CD8-positive, alpha-beta memory T cell (primary cell): ENCODE measurements at regions of chr13 and their contacts with region 1.

Region 1: DNA sequence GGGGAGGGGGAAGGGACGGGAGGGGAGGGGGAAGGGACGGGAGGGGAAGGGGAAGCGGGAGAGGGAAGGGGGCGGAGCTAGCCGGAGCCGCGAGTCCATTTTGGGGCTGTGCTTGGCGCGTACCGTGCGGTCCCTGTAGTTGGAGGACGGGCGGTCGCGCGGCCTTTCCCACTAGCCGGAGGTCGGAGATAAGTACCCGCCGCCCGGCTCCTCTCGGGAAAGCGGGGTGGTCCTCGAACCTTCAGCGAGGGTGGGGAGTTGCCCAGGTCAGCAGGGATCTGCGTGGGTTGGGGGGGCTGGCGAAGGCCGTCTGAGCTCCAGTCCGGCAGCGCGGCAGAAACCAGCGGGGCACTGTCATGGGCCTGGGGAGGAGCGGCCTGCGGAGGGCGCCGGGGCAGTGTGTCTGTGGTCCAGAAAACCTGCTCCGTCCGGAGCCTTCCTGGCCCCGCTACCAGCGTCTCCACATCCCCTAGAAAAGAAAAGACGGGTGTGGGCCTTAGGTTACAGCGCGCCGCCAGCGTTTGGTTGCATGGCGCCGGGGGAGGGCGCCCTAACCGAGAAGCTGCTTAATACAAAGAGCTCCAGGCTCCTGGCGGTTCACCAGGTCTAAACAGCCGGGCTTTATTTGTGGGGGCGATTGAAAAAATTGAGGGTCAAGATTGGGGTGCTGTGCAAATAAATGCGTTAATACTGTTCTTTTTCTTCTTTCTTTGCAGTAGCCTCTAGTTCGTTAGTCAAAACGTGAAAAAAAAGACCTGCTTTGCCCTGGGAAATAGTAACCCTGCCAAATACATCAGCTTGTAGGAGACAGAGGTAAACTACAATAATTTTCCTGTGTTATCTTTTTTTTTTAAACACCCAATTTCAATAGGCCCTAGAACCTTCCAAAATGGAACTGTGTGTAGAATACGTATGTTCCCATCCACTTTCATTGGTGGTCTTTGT is at the start of gene TRIM13:
- DNase-seq: peak; percentile 62 to 86 (median 78)
- H3K4me3 ChIP-seq: peak within 1 kb of the TSS; percentile 92
- H3K4me3 Mint-ChIP-seq: peak within 1 kb of the TSS; percentile 84 to 96 (median 89)
- H3K27ac ChIP-seq: peak within 1 kb of the TSS; percentile 88
- H3K27ac Mint-ChIP-seq: peak within 1 kb of the TSS; percentile 84 to 96 (median 91)
- H3K4me1 ChIP-seq: peaks cover 36% of the 10 kb centered on the region
- H3K4me1 Mint-ChIP-seq: peaks cover 39 to 58% (median 56%) of the 10 kb centered on the region in 3 donors
- H3K27me3 ChIP-seq: no peaks in the 10 kb centered on the region
- H3K27me3 Mint-ChIP-seq: peaks cover 0 to 2% of the 10 kb centered on the region in 2 donors
- total RNA-seq, gene TRIM13: 16.5 to 17.1 TPM

Region 2: DNA sequence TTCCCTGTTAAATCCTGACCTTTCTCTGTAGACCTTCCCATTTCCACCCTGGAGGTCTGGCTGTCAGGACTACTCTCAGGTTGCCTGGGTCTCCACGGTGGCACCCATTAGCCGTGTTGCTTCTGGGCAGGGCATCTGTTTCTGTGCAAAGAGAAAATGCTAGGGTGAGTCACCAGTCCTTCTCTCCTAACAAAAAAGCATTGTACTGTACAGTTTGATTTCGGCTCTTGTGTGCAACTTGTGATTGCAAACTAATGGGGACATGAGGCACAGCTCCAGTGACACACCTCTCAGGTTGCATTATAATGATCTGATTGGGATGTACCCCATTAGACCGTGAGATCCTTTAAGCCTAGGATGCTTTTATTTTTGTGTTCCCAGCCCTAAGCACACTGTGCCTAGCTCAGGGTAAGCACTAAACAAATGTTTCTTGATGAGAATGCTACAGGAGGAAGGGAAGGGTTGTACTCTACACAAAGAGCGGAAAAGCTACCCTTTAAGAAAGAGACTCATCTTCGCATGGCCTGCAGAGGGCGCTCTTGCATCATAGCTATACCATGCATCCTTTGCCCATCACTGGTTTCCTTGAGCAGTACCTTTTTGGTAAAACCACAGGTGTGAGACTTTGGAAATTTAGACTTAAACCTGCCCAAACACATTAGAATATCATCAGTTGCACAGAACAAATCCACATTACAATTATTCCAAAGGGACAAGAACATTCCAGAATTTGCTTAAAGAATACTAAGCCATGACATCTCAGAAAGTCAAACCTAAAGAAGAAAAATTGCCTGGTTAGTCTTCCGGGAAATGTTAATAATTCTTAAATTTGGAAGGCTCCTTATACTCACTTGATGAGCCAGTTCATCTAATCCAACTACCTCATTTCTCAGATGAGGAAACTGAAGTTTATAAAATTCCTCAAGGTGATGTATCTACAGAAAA is 20.6 kb before region 1 on chr13:
- CTCF ChIA-PET with region 1: interaction called, 10 read pairs
- POLR2A ChIA-PET with region 1: interaction called, 4 read pairs
- DNase-seq: peak; percentile 61 to 81 (median 69)
- H3K4me3 ChIP-seq: no peak overlapping the region
- H3K4me3 Mint-ChIP-seq: no peak overlapping the region
- H3K27ac ChIP-seq: no peak overlapping the region
- H3K27ac Mint-ChIP-seq: peak overlapping the region in 2 of 8 donors; percentile 18 to 21
- H3K4me1 ChIP-seq: no peaks in the 10 kb centered on the region
- H3K4me1 Mint-ChIP-seq: peaks cover 2 to 5% (median 5%) of the 10 kb centered on the region in 3 donors
- H3K27me3 ChIP-seq: no peaks in the 10 kb centered on the region
- H3K27me3 Mint-ChIP-seq: no peaks in the 10 kb centered on the region

Region 3: DNA sequence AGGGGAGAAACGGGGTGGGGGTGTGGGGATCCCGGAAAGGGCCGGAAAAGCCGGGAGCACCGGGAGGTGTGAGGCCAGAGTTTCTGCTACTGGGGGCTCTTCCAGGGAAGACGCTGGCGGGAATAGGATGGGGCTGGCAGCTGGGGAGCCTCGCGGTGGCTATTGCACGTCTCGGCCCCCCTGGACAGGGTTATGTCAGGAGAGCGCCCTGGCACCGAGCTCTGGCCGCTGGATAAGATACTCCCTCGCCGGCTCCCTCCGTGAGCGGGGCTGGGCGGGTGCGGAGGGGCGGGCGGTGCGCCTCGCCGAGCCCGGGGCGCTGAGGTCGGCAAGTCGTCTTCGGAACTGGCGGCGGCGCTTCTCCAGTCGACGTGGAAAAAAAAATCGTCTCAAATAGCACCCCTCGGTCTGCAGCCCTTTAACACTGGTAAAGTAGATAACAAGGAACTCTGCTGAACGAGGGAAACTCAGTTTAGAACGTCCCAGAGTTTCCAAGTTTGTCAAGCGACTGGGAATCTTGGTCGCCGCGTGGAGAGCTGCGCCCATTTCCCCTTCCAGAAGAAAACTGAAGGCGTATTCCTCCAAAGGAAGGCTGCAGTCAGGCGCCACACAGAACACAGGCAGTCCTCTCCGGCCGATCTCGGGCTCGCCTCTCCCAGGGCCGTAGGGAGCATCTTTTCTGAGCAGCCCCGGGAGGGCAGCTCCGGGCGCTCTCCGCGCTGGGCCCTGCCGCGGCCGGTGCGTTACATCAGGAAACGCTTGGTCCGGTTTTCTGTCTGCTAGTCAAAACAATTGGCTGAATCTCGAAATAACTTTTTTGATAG is 133.1 kb after region 1 on chr13:
- CTCF ChIA-PET with region 1: interaction called, 47 read pairs
- POLR2A ChIA-PET with region 1: interaction called, 62 read pairs
- DNase-seq: peak in 3 of 5 donors; percentile 27 to 51 (median 41)
- H3K4me3 ChIP-seq: peak overlapping the region; percentile 23
- H3K4me3 Mint-ChIP-seq: peak overlapping the region; percentile 76 to 91 (median 84)
- H3K27ac ChIP-seq: no peak overlapping the region
- H3K27ac Mint-ChIP-seq: peak overlapping the region in 7 of 8 donors; percentile 50 to 97 (median 80)
- H3K4me1 ChIP-seq: peaks cover 65% of the 10 kb centered on the region
- H3K4me1 Mint-ChIP-seq: peaks cover 52 to 63% (median 60%) of the 10 kb centered on the region in 3 donors
- H3K27me3 ChIP-seq: peaks cover 62% of the 10 kb centered on the region
- H3K27me3 Mint-ChIP-seq: peaks cover 61 to 72% of the 10 kb centered on the region in 2 donors

Region 4: GRCh38 chr13:50244713-50245574 is 247.7 kb after region 1 on chr13:
- CTCF ChIA-PET with region 1: no interaction called
- POLR2A ChIA-PET with region 1: no interaction called
- DNase-seq: peak in 1 of 5 donors; percentile 48
- H3K4me3 ChIP-seq: no peak overlapping the region
- H3K4me3 Mint-ChIP-seq: peak overlapping the region in 3 of 7 donors; percentile 10 to 42 (median 19)
- H3K27ac ChIP-seq: peak overlapping the region; percentile 14
- H3K27ac Mint-ChIP-seq: peak overlapping the region in 6 of 8 donors; percentile 6 to 75 (median 23)
- H3K4me1 ChIP-seq: peaks cover 8% of the 10 kb centered on the region
- H3K4me1 Mint-ChIP-seq: peaks cover 43 to 50% (median 48%) of the 10 kb centered on the region in 3 donors
- H3K27me3 ChIP-seq: no peaks in the 10 kb centered on the region
- H3K27me3 Mint-ChIP-seq: no peaks in the 10 kb centered on the region

Region 5: GRCh38 chr13:50365408-50366391 is 368.5 kb after region 1 on chr13:
- CTCF ChIA-PET with region 1: no interaction called
- POLR2A ChIA-PET with region 1: interaction called, 13 read pairs
- DNase-seq: peak in 3 of 5 donors; percentile 16 to 70 (median 49)
- H3K4me3 ChIP-seq: peak overlapping the region; percentile 39
- H3K4me3 Mint-ChIP-seq: peak overlapping the region; percentile 63 to 87 (median 78)
- H3K27ac ChIP-seq: peak overlapping the region; percentile 69
- H3K27ac Mint-ChIP-seq: peak overlapping the region; percentile 84 to 99 (median 94)
- H3K4me1 ChIP-seq: peaks cover 37% of the 10 kb centered on the region
- H3K4me1 Mint-ChIP-seq: peaks cover 48 to 67% (median 57%) of the 10 kb centered on the region in 3 donors
- H3K27me3 ChIP-seq: no peaks in the 10 kb centered on the region
- H3K27me3 Mint-ChIP-seq: no peaks in the 10 kb centered on the region

Region 6: GRCh38 chr13:50911937-50912795 is 914.9 kb after region 1 on chr13:
- CTCF ChIA-PET with region 1: interaction called, 27 read pairs
- POLR2A ChIA-PET with region 1: interaction called, 19 read pairs
- DNase-seq: peak; percentile 81 to 94 (median 83)
- H3K4me3 ChIP-seq: peak overlapping the region; percentile 90
- H3K4me3 Mint-ChIP-seq: peak overlapping the region; percentile 85 to 97 (median 94)
- H3K27ac ChIP-seq: peak overlapping the region; percentile 90
- H3K27ac Mint-ChIP-seq: peak overlapping the region; percentile 67 to 98 (median 92)
- H3K4me1 ChIP-seq: peaks cover 35% of the 10 kb centered on the region
- H3K4me1 Mint-ChIP-seq: peaks cover 53 to 66% (median 62%) of the 10 kb centered on the region in 3 donors
- H3K27me3 ChIP-seq: no peaks in the 10 kb centered on the region
- H3K27me3 Mint-ChIP-seq: no peaks in the 10 kb centered on the region